B cell (primary cell): ENCODE measurements at regions of chr9 and their contacts with region 1.

Region 1: DNA sequence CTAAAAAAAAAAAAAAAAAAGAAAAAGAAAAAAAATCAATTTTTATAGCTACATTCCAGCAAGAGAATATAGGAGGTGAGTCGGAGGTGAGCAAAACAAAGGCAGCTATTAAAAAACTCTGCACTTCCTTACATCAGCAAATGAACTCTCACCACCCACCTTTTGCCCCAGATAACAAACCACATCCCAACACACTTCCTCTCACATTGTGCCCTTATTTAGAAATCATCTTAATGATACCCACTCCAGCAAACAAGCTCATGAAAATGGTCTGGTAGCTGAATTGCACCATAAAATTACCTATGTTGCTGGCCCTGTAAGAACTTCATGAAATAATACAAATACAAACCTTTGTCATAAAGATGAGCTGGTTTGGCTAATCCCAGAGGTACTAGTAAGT is 82.9 kb downstream of the CEMIP2 start:
- DNase-seq: peak; percentile 39
- ATAC-seq: no peak
- H3K4me3 ChIP-seq: peak overlapping the region in 2 of 5 experiments; percentile 17 to 20
- H3K4me3 Mint-ChIP-seq: peak overlapping the region; percentile 70
- H3K27ac ChIP-seq: peak overlapping the region in 1 of 2 donors; percentile 65
- H3K27ac Mint-ChIP-seq: peak overlapping the region; percentile 60
- H3K4me1 ChIP-seq: peaks cover 47 to 48% of the 10 kb centered on the region in 2 donors
- H3K4me1 Mint-ChIP-seq: peaks cover 45% of the 10 kb centered on the region
- H3K27me3 ChIP-seq: no peaks in the 10 kb centered on the region
- H3K27me3 Mint-ChIP-seq: no peaks in the 10 kb centered on the region
- CTCF ChIP-seq: no peak

Region 2: DNA sequence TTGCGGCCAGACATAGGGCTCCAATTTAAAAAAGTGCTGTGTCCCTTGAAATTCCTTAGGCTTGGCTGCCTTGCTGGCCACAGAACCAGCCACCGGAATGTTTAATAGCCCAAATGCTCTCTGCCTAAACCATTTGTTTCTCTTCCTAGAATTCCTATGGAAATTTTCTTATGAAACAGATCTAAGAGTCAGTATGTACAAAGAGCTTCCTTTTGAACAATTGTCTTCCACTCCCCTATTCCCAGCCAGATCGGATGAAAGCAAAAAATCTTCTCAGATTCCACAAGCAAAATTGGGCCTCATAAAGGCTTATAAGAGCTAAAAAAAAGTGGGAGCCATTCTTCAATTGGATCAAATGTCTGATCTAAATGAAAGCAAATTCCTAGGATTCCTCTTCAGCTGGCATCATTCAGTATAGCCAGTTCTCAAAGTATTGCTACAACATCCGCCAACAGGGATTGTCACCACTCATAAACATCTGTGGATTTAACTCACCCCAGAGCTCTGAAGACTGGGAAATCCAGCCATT is 21.4 kb before region 1 on chr9:
- CTCF ChIA-PET with region 1: interaction called, 3 read pairs
- POLR2A ChIA-PET with region 1: interaction called, 11 read pairs
- intact Hi-C with region 1: no loop called
- DNase-seq: no peak
- ATAC-seq: no peak
- H3K4me3 ChIP-seq: no peak overlapping the region
- H3K4me3 Mint-ChIP-seq: no peak overlapping the region
- H3K27ac ChIP-seq: no peak overlapping the region
- H3K27ac Mint-ChIP-seq: no peak overlapping the region
- H3K4me1 ChIP-seq: no peaks in the 10 kb centered on the region
- H3K4me1 Mint-ChIP-seq: no peaks in the 10 kb centered on the region
- H3K27me3 ChIP-seq: no peaks in the 10 kb centered on the region
- H3K27me3 Mint-ChIP-seq: peaks cover 15% of the 10 kb centered on the region
- CTCF ChIP-seq: no peak